Mammary epithelial cell (primary cell): ENCODE measurements at regions of chr1 and their contacts with region 1.

Region 1: GRCh38 chr1:214422137-214422671 is 129.2 kb downstream of the PTPN14 start:
- DNase-seq: peak; percentile 88
- H3K4me3 ChIP-seq: peak overlapping the region in 1 of 3 experiments; percentile 14
- H3K27ac ChIP-seq: peak overlapping the region; percentile 92
- H3K4me1 ChIP-seq: peaks cover 86% of the 10 kb centered on the region
- H3K27me3 ChIP-seq: no peaks in the 10 kb centered on the region
- CTCF ChIP-seq: no peak

Region 2: GRCh38 chr1:214404571-214405213 is 17.5 kb before region 1 on chr1:
- CTCF ChIA-PET with region 1: no interaction called
- dilution Hi-C with region 1: no loop called
- in situ Hi-C with region 1: no loop called
- intact Hi-C with region 1: loop called (anchors 1 kb)
- DNase-seq: peak; percentile 98
- H3K4me3 ChIP-seq: no peak overlapping the region
- H3K27ac ChIP-seq: peak overlapping the region; percentile 95
- H3K4me1 ChIP-seq: peaks cover 34% of the 10 kb centered on the region
- H3K27me3 ChIP-seq: no peaks in the 10 kb centered on the region
- CTCF ChIP-seq: no peak